Heart left ventricle (tissue), 16 donors: ENCODE measurements at regions of chr11 and their contacts with region 1.

Region 1: GRCh38 chr11:57249384-57250319 is 12.6 kb upstream of the APLNR start:
- DNase-seq: peak; percentile 59 to 77 (median 67)
- ATAC-seq: peak; percentile 30 to 76 (median 53)
- H3K4me3 ChIP-seq: peak overlapping the region in 4 of 12 donors; percentile 0 to 24 (median 20)
- H3K27ac ChIP-seq: peak overlapping the region in 8 of 12 donors; percentile 20 to 64 (median 46)
- H3K4me1 ChIP-seq: peaks cover 0 to 33% (median 13%) of the 10 kb centered on the region in 12 donors
- H3K27me3 ChIP-seq: peaks cover 0 to 4% (median 0%) of the 10 kb centered on the region in 9 donors
- CTCF ChIP-seq: peak; percentile 75 to 92 (median 86)
- POLR2A ChIP-seq: no peak

Region 2: DNA sequence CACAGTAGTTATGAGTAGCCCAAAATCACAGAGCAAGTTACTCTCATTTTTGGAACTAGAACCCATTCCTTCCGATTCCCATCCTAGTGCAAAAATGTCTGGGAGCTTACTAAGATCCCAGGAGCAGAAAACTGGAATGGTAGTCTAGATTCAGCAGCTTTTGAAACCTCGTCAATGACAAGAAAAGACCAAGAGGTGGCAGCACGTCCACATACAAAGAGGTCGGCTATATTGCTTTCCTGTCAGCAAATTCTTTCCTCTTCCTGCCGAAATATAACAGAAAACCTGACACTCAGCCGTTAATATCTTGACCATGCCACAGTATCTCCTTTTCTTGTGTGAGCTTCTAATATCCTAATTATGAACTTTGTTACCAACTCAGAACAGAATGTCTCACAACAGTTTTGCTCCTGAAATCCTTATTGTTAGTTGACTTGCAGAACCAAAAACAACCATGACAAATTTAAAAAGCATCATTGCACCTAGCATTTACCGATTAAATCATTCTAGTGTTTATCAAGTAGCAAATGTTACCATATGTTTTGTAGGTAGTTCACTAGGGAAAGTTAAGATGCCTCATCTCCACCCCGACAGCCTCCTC is 408.3 kb before region 1 on chr11:
- intact Hi-C with region 1: loop called (anchors 1 to 2 kb)
- DNase-seq: peak in 3 of 5 donors; percentile 10 to 25 (median 22)
- ATAC-seq: peak in 1 of 4 donors; percentile 66
- H3K4me3 ChIP-seq: no peak overlapping the region
- H3K27ac ChIP-seq: no peak overlapping the region
- H3K4me1 ChIP-seq: no peaks in the 10 kb centered on the region
- H3K27me3 ChIP-seq: no peaks in the 10 kb centered on the region
- CTCF ChIP-seq: peak; percentile 45 to 81 (median 70)
- POLR2A ChIP-seq: no peak

Region 3: GRCh38 chr11:57116654-57117053 is 133.0 kb before region 1 on chr11:
- intact Hi-C with region 1: loop called in 7 of 10 experiments (anchors 1 to 5 kb)
- DNase-seq: peak in 1 of 5 donors; percentile 31
- ATAC-seq: peak in 3 of 4 donors; percentile 42 to 63 (median 48)
- H3K4me3 ChIP-seq: no peak overlapping the region
- H3K27ac ChIP-seq: no peak overlapping the region
- H3K4me1 ChIP-seq: peaks cover 0 to under 1% (median 0%) of the 10 kb centered on the region in 12 donors
- H3K27me3 ChIP-seq: no peaks in the 10 kb centered on the region
- CTCF ChIP-seq: peak; percentile 43 to 68 (median 56)
- POLR2A ChIP-seq: no peak

Region 4: DNA sequence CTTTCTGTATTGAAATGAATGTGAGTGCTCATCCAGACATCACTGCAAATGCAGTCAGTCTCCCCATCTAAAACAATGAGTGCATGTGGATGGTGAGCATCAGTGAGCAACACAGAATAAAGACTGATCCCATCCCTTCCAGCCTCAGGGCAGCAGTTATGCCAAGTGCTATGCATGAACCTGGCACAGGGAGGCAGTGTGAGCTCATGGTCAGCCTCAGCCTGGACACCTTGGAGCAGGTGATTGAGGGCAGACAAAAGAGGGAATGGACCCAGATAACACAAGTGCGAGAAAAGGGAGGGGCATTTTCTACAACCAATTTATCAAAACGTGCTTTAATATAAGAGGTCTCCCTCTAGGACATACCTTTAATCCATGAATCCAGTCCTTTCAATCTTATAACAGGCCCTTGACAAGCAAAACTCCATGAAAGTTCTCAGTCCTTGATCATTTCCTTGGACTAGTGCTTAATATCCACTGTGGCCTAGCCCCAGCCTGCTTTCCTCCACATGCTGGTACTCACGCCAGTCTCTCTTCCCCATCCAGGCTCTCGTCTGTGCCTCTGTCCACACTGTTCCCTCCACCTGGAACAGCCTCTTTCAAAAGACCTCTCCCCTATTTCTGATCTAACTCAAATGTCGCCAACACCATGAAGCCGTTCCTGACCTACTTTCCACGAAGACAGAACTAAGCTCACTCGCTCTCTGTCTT is 118.4 kb before region 1 on chr11:
- intact Hi-C with region 1: loop called in 9 of 10 experiments (anchors 1 to 5 kb)
- DNase-seq: peak in 3 of 5 donors; percentile 29 to 35 (median 33)
- ATAC-seq: peak in 3 of 4 donors; percentile 69 to 73 (median 72)
- H3K4me3 ChIP-seq: no peak overlapping the region
- H3K27ac ChIP-seq: no peak overlapping the region
- H3K4me1 ChIP-seq: peaks cover 0 to 5% (median 0%) of the 10 kb centered on the region in 12 donors
- H3K27me3 ChIP-seq: peaks cover 0 to 3% (median 0%) of the 10 kb centered on the region in 9 donors
- CTCF ChIP-seq: peak; percentile 30 to 75 (median 64)
- POLR2A ChIP-seq: no peak

Region 5: DNA sequence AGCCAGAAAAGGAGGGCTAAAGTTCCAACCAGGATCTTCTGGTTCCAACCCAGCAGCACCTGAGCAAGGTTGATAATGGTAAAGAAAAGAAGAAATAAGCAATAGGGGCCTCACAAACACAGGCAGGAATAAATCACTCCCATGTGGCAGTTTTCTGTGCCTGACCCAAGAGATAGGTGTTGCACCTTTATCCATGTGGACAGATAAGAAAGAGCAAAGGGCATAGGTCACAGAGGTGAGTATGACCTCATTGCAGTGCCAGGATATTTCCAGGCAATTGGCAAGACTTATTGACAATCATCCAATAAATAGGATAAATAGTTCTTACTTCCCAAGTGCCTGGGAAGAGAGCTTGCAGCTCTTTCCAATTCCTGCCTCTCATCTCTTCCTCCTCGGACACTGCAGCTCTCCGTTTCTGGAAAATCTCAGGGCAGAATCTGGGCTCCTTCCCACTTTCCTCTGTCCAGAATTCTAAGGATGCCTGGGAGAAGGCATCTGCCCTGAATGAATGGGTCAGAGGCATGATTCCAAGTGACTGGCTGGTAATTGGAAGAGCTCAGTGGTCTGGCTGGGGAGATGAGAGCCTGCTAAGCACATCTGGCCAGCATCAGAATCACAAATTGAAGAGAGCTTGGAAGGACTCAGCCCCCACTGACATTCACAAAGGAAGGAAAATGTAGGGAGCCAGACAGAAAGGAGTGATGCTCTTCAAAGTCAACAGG is 82.4 kb before region 1 on chr11:
- intact Hi-C with region 1: no loop called
- DNase-seq: no peak
- ATAC-seq: no peak
- H3K4me3 ChIP-seq: no peak overlapping the region
- H3K27ac ChIP-seq: no peak overlapping the region
- H3K4me1 ChIP-seq: peaks cover 0 to 4% (median 0%) of the 10 kb centered on the region in 12 donors
- H3K27me3 ChIP-seq: peaks cover 0 to 3% (median 0%) of the 10 kb centered on the region in 9 donors
- CTCF ChIP-seq: no peak
- POLR2A ChIP-seq: no peak

Region 6: GRCh38 chr11:57205041-57205671 is 44.5 kb before region 1 on chr11:
- intact Hi-C with region 1: loop called in 6 of 10 experiments (anchors 5 kb)
- DNase-seq: peak in 1 of 5 donors; percentile 25
- ATAC-seq: peak in 3 of 4 donors; percentile 28 to 42 (median 41)
- H3K4me3 ChIP-seq: no peak overlapping the region
- H3K27ac ChIP-seq: peak overlapping the region in 9 of 12 donors; percentile 3 to 73 (median 31)
- H3K4me1 ChIP-seq: peaks cover 12 to 73% (median 44%) of the 10 kb centered on the region in 12 donors
- H3K27me3 ChIP-seq: no peaks in the 10 kb centered on the region
- CTCF ChIP-seq: peak in 6 of 12 donors; percentile 12 to 37 (median 20)
- POLR2A ChIP-seq: no peak

Region 7: DNA sequence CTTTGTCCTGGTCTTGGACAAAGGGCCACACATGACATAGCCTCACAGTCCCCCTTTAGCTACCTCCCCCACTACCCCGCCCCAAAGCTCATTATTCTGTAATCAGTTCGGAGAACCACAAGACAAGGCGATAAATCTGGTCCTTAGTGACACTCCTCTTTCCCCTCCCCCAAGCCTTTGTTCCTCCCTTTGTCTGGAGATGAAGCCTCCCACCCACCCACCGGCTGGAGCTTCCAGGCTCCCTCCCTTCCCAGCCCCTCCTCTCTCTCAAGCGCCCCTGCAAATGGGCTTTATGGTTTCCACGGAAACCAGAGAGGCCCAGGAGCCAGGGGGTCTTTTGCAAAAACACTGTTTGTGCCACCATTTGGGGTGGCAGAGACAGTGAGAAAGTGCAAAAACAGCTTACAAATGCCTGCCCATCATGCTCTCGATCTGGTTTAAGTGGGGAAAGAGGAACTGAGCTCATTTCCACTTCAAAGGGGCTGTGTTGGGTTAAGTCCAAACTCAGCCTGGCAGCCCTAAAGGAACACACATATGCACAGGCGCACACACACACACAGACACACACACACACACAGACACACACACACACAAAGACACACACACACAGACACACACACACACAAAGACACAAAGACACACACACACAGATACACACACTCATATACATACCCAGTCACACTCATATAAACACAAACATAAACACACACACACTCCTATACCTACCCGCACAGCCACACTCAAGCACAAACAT is 36.1 kb before region 1 on chr11:
- intact Hi-C with region 1: loop called in 3 of 10 experiments (anchors 5 kb)
- DNase-seq: peak in 1 of 5 donors; percentile 38
- ATAC-seq: peak in 3 of 4 donors; percentile 48 to 56 (median 51)
- H3K4me3 ChIP-seq: peak overlapping the region in 2 of 12 donors; percentile 7 to 8
- H3K27ac ChIP-seq: peak overlapping the region in 10 of 12 donors; percentile 41 to 75 (median 66)
- H3K4me1 ChIP-seq: peaks cover 0 to 70% (median 39%) of the 10 kb centered on the region in 12 donors
- H3K27me3 ChIP-seq: no peaks in the 10 kb centered on the region
- CTCF ChIP-seq: no peak
- POLR2A ChIP-seq: no peak

Region 8: GRCh38 chr11:57277845-57278709 is 28.4 kb after region 1 on chr11:
- intact Hi-C with region 1: loop called in 3 of 10 experiments (anchors 1 to 2 kb)
- DNase-seq: peak; percentile 72 to 80 (median 74)
- ATAC-seq: peak; percentile 13 to 81 (median 74)
- H3K4me3 ChIP-seq: peak overlapping the region in 2 of 12 donors; percentile 20 to 27
- H3K27ac ChIP-seq: peak overlapping the region; percentile 40 to 94 (median 80)
- H3K4me1 ChIP-seq: peaks cover 0 to 39% (median 24%) of the 10 kb centered on the region in 12 donors
- H3K27me3 ChIP-seq: no peaks in the 10 kb centered on the region
- CTCF ChIP-seq: peak; percentile 60 to 90 (median 80)
- POLR2A ChIP-seq: no peak

Region 9: GRCh38 chr11:57349491-57350274 is 100.0 kb after region 1 on chr11:
- intact Hi-C with region 1: no loop called
- DNase-seq: peak; percentile 65 to 89 (median 72)
- ATAC-seq: peak in 3 of 4 donors; percentile 62 to 82 (median 71)
- H3K4me3 ChIP-seq: no peak overlapping the region
- H3K27ac ChIP-seq: peak overlapping the region in 8 of 12 donors; percentile 0 to 71 (median 30)
- H3K4me1 ChIP-seq: peaks cover 0 to 14% (median 5%) of the 10 kb centered on the region in 12 donors
- H3K27me3 ChIP-seq: no peaks in the 10 kb centered on the region
- CTCF ChIP-seq: peak; percentile 88 to 95 (median 92)
- POLR2A ChIP-seq: no peak